Spleen (tissue), 13 donors: ENCODE measurements at regions of chr22 and their contacts with region 1.

Region 1: DNA sequence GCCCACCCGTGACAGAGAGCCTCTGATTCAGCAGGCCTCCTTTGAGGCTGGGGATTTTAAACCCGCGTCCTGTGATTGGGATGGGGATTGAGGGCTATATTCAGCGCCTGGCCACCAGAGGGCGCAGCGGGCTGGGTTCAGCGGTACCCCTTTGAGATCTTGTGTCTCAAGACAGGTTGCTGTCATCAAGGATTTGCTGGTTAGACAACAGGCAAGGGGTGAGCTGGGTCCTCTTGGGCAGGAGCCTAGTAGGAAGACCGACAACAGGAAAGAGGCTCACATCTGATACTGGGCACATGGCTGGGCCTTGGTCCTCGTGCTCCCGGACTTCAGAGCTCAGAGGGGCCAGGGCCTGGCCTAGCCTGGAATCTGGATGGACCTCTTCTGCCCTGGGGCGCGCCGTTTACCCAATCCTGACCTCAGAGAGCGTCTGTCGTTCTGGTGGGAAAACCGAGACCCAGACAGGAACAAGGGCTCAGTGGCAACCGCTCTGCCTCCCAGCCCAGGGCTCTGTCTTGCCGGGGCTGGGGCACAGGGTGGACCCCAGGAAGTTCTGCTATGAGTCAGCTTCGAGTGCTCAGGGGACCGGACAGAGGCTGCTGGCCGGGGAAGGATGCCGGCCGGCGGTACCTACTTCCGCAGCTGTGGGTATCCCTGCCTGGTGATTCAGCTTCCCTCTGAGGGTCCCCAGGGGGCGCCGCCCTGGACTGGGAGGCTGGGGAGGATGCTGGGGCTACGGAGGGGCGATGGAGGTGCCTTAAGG is 929 bp upstream of the SLC35E4 start:
- DNase-seq: peak; percentile 97
- H3K4me3 ChIP-seq: peak overlapping the region; percentile 27 to 70 (median 64)
- H3K27ac ChIP-seq: peak overlapping the region; percentile 86 to 95 (median 90)
- H3K4me1 ChIP-seq: peaks cover 21 to 42% (median 33%) of the 10 kb centered on the region in 6 donors
- H3K27me3 ChIP-seq: no peaks in the 10 kb centered on the region
- CTCF ChIP-seq: peak; percentile 81 to 98 (median 96)
- POLR2A ChIP-seq: no peak

Region 2: GRCh38 chr22:30183861-30184278 is 450.8 kb before region 1 on chr22:
- intact Hi-C with region 1: no loop called
- DNase-seq: no peak
- H3K4me3 ChIP-seq: no peak overlapping the region
- H3K27ac ChIP-seq: peak overlapping the region in 3 of 8 donors; percentile 19 to 79 (median 32)
- H3K4me1 ChIP-seq: peaks cover 0 to 87% (median 35%) of the 10 kb centered on the region in 6 donors
- H3K27me3 ChIP-seq: no peaks in the 10 kb centered on the region
- CTCF ChIP-seq: no peak
- POLR2A ChIP-seq: no peak

Region 3: DNA sequence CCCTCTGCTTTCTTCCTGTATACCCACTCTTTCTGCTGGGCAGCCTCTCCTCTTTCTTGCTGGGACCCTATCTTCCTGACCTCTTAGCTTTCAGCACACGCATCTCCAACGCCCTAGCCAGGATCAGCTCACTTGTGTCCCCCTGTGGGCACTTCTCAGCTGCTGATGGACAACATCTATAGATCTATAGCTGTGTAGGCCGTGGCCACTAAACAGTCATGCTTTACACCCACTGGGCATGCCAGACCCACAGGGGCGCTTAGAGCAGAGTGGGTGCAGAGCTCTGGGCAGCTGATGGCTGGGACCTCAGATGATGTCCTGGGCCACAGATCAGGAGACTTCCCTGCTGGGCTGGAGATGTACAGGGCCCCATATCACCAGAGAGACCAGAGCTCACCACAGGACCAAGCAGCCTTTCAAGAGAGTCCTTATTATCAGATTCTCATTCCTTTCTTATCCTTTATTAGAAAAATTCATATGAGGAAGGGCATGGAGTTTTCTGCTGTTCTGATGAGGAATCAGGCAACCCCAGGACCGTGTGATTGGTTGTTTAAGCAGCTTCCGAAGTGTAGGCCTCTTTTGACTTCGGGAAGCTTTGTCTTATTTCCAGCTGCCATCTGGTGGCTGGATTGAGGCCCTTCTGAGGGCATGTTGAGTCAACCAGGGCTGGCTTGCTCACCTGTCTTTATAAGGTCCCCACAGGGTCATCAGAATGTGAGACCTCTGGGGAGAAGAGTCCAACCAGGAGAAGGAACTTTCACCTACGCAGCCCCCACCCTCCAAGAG is 120.5 kb after region 1 on chr22:
- intact Hi-C with region 1: loop called (anchors 2 kb)
- DNase-seq: no peak
- H3K4me3 ChIP-seq: no peak overlapping the region
- H3K27ac ChIP-seq: peak overlapping the region in 2 of 8 donors; percentile 9 to 48
- H3K4me1 ChIP-seq: peaks cover 0 to 17% (median 3%) of the 10 kb centered on the region in 6 donors
- H3K27me3 ChIP-seq: no peaks in the 10 kb centered on the region
- CTCF ChIP-seq: peak in 10 of 11 experiments; percentile 39 to 70 (median 59)
- POLR2A ChIP-seq: no peak